ENCODE measurements at regions of chr20 and their contacts with region 1.

Region 1: GRCh38 chr20:38812182-38812581 is 6.7 kb downstream of the PPP1R16B start:
- DNase-seq: no peak
- H3K4me3 ChIP-seq: no peak overlapping the region
- H3K27ac ChIP-seq: no peak overlapping the region
- H3K4me1 ChIP-seq: no peaks in the 10 kb centered on the region
- H3K27me3 ChIP-seq: no peaks in the 10 kb centered on the region
- CTCF ChIP-seq: no peak

Region 2: GRCh38 chr20:38893565-38894090 is 81.4 kb after region 1 on chr20:
- intact Hi-C with region 1: loop called (anchors 10 kb)
- DNase-seq: peak in 1 of 2 donors; percentile 80
- H3K4me3 ChIP-seq: no peak overlapping the region
- H3K27ac ChIP-seq: no peak overlapping the region
- H3K4me1 ChIP-seq: peaks cover 0 to 2% of the 10 kb centered on the region in 2 donors
- H3K27me3 ChIP-seq: no peaks in the 10 kb centered on the region
- CTCF ChIP-seq: peak; percentile 53 to 96 (median 89)